CD4-positive, alpha-beta memory T cell (primary cell): ENCODE measurements at regions of chr5 and their contacts with region 1.

Region 1: GRCh38 chr5:140346348-140347101 is at the start of gene HBEGF:
- DNase-seq: peak; percentile 26 to 61 (median 38)
- H3K4me3 ChIP-seq: peak within 1 kb of the TSS in 1 of 2 donors; percentile 28
- H3K4me3 Mint-ChIP-seq: peak within 1 kb of the TSS; percentile 72 to 91 (median 86)
- H3K27ac ChIP-seq: peak within 1 kb of the TSS; percentile 27
- H3K27ac Mint-ChIP-seq: peak within 1 kb of the TSS in 6 of 7 donors; percentile 43 to 79 (median 76)
- H3K4me1 ChIP-seq: peaks cover 43% of the 10 kb centered on the region
- H3K4me1 Mint-ChIP-seq: peaks cover 27 to 53% (median 35%) of the 10 kb centered on the region in 4 donors
- H3K27me3 ChIP-seq: no peaks in the 10 kb centered on the region
- H3K27me3 Mint-ChIP-seq: peaks cover 1 to 4% of the 10 kb centered on the region in 2 donors
- total RNA-seq, gene HBEGF: 0.52 to 0.86 TPM

Region 2: DNA sequence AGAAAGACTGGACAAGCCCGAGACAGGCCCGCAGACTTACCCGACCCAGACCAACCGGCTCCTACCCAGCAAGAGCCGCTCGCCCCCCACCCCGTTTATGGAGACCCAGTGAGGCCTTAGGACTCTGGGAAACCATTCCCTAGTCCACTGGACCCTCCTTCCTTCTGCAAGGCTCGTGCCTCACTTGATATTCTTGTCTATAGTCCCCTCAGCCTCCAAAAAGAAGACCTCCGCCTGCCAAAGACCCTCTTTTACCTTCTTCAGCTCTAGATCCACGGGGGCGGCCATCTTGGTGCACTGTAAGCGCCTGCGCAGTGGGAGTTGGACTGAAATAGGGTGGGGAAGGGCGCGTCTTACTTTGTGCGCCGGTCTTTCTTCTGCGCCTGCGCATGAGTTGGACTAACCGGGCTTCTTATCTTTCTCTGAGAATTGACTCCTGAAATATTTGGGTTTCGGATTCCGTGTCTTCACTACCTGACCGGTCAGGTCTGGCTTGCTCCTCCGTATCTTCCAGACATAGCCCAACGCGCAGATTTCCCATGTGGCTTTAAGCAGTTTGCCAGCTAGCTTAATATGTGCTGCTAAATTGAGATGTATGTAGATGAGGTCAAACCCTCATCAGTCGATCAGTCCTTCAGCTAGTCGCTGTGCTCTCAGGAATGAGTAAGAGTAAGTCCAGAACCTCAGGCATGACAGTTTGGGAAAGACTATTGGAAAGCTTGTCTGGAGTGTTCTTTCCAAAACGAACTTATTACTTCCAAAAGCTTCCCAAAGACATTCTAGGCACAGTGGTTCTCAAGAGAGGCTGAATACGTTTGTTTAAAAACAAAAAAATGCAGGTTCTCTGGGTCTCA is 43.5 kb before region 1 on chr5 and contains the start of gene PFDN1:
- CTCF ChIA-PET with region 1: interaction called, 13 read pairs
- POLR2A ChIA-PET with region 1: interaction called, 11 read pairs
- intact Hi-C with region 1: loop called (anchors 5 kb)
- DNase-seq: peak; percentile 89 to 94 (median 92)
- H3K4me3 ChIP-seq: peak within 1 kb of the TSS; percentile 87 to 92
- H3K4me3 Mint-ChIP-seq: peak within 1 kb of the TSS; percentile 96 to 100 (median 100)
- H3K27ac ChIP-seq: peak within 1 kb of the TSS; percentile 81
- H3K27ac Mint-ChIP-seq: peak within 1 kb of the TSS; percentile 85 to 99 (median 99)
- H3K4me1 ChIP-seq: peaks cover 16% of the 10 kb centered on the region
- H3K4me1 Mint-ChIP-seq: peaks cover 15 to 26% (median 23%) of the 10 kb centered on the region in 4 donors
- H3K27me3 ChIP-seq: no peaks in the 10 kb centered on the region
- H3K27me3 Mint-ChIP-seq: peaks cover 0 to 3% of the 10 kb centered on the region in 2 donors
- total RNA-seq, gene PFDN1: 24.8 to 26.2 TPM

Region 3: DNA sequence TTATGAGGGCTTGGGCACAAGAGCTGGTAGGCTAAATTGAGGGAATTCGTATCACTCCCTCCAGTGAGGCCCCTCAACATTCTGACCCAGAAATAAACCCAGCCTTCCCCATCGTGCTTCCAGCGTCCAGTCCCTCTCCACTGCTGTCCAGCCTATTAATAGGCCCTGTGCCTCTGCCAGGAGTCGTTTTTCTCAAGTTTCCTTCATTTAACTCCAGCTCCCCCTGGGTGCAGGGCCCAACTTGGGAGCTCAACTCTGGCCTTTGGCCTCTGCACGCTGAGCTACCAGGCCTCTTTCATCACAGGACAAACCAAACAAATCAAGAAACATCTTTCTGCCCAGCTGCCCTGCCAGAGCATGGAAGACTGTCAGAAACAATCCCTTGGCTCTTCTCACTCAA is 10.1 kb before region 1 on chr5:
- CTCF ChIA-PET with region 1: interaction called, 20 read pairs
- POLR2A ChIA-PET with region 1: no interaction called
- intact Hi-C with region 1: no loop called
- DNase-seq: no peak
- H3K4me3 ChIP-seq: no peak overlapping the region
- H3K4me3 Mint-ChIP-seq: no peak overlapping the region
- H3K27ac ChIP-seq: no peak overlapping the region
- H3K27ac Mint-ChIP-seq: peak overlapping the region in 1 of 7 donors; percentile 87
- H3K4me1 ChIP-seq: peaks cover 2% of the 10 kb centered on the region
- H3K4me1 Mint-ChIP-seq: peaks cover 0 to 10% (median 5%) of the 10 kb centered on the region in 4 donors
- H3K27me3 ChIP-seq: no peaks in the 10 kb centered on the region
- H3K27me3 Mint-ChIP-seq: no peaks in the 10 kb centered on the region

Region 4: DNA sequence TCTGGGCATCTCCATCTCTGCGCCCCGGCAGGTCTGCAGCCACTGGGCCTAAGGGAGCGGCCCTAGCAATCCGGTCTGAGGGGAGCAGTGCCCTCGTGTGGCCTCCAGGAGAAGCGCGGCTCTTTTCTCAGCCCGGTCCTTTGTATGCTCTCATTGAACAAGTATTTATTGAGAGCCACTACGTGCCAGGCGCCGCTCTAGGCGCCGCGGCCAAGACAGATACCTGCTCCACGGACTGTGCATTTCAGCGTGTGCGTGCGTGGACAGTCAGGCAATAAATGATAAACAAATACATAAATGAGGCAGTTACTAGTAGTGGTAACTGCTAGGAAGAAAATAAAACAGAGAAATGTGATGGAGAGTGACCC is 11.2 kb after region 1 on chr5:
- CTCF ChIA-PET with region 1: interaction called, 37 read pairs
- POLR2A ChIA-PET with region 1: no interaction called
- intact Hi-C with region 1: no loop called
- DNase-seq: peak; percentile 66 to 73 (median 72)
- H3K4me3 ChIP-seq: peak overlapping the region in 1 of 2 donors; percentile 46
- H3K4me3 Mint-ChIP-seq: peak overlapping the region; percentile 76 to 91 (median 84)
- H3K27ac ChIP-seq: no peak overlapping the region
- H3K27ac Mint-ChIP-seq: peak overlapping the region in 6 of 7 donors; percentile 68 to 93 (median 82)
- H3K4me1 ChIP-seq: peaks cover 13% of the 10 kb centered on the region
- H3K4me1 Mint-ChIP-seq: peaks cover 9 to 17% (median 11%) of the 10 kb centered on the region in 4 donors
- H3K27me3 ChIP-seq: no peaks in the 10 kb centered on the region
- H3K27me3 Mint-ChIP-seq: peaks cover 0 to 2% of the 10 kb centered on the region in 2 donors

Region 5: GRCh38 chr5:140362860-140363630 is 16.5 kb after region 1 on chr5:
- CTCF ChIA-PET with region 1: interaction called, 37 read pairs
- POLR2A ChIA-PET with region 1: interaction called, 3 read pairs
- intact Hi-C with region 1: no loop called
- DNase-seq: peak; percentile 74 to 79 (median 77)
- H3K4me3 ChIP-seq: peak overlapping the region in 1 of 2 donors; percentile 52
- H3K4me3 Mint-ChIP-seq: peak overlapping the region; percentile 71 to 84 (median 76)
- H3K27ac ChIP-seq: no peak overlapping the region
- H3K27ac Mint-ChIP-seq: peak overlapping the region in 5 of 7 donors; percentile 40 to 72 (median 59)
- H3K4me1 ChIP-seq: peaks cover 9% of the 10 kb centered on the region
- H3K4me1 Mint-ChIP-seq: peaks cover 3 to 12% (median 6%) of the 10 kb centered on the region in 4 donors
- H3K27me3 ChIP-seq: no peaks in the 10 kb centered on the region
- H3K27me3 Mint-ChIP-seq: peaks cover 0 to 2% of the 10 kb centered on the region in 2 donors